Caco-2 (cell line): ENCODE measurements at regions of chr12 and their contacts with region 1.

Region 1: DNA sequence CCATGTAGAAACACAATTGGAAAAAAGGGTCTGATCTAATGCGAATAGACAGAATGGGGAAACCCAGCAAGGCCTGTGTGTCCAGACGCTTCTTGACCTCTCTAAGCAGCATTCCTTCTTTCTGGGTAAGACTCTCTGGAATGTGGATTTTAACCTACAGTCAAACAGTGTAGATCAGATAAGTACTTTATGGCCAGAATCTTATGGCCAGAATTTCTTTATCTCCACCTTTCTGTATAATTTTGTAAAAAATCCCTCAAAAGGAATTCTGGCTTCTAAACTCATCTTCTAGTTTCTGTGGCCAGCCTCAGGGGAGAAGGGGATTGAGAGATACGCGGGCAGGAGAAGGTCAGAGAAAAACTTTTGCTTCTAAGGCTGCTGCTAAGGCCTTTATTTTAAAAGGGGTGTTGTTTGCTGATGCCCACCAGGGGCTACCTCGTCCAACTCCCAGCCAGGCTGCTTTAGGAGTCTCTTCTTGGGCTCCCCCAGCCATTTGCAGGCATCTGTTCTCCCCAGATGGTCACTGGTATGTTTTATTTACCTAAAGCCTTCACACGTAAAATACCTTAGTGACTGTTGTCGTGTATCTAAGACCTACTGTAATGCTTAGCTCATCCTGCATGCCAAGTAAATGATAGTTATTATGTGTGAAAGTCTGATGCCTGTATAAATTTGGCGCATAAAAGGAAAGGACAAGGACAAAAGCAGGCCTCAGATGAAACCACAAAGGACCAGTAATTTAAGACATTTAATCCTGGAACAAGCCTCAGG is 68.4 kb downstream of the ANO6 start:
- DNase-seq: peak; percentile 83
- H3K4me3 ChIP-seq: no peak overlapping the region
- H3K4me3 Mint-ChIP-seq: peak overlapping the region; percentile 67
- H3K27ac Mint-ChIP-seq: peak overlapping the region; percentile 78
- H3K4me1 ChIP-seq: peaks cover 87% of the 10 kb centered on the region
- H3K4me1 Mint-ChIP-seq: peaks cover 88% of the 10 kb centered on the region
- H3K27me3 ChIP-seq: no peaks in the 10 kb centered on the region
- H3K27me3 Mint-ChIP-seq: no peaks in the 10 kb centered on the region
- CTCF ChIP-seq: peak; percentile 24 to 27

Region 2: DNA sequence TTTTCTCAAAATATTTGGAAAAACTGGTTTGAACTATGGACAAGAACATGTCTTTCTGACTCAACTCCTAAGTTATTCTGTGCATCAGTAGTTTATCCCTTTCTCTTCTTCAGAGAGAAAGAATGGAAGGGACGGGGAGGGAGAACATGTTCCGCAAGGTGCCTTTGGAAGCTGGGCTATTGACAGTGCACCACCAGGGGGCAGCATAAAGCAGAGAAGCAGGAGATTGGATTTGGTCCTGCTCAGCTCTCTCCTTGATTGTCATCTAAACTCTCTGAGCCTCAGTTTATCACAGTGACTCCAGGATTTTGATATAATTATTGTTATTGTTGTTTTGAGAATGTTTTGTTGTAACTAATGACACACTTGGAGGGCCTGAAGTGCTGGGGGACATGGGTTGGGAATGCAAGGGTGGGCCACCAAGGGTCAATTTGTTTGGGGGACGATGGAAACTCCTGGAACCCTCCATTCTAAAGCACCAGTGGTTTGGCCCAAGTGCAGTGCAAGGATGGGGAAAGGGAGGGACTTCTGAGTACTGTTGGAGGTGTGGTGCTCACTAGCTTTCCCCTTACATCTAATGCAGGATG is 113.8 kb before region 1 on chr12:
- CTCF ChIA-PET with region 1: no interaction called
- POLR2A ChIA-PET with region 1: no interaction called
- intact Hi-C with region 1: loop called (anchors 5 kb)
- DNase-seq: peak; percentile 84 to 90
- H3K4me3 ChIP-seq: no peak overlapping the region
- H3K4me3 Mint-ChIP-seq: no peak overlapping the region
- H3K27ac Mint-ChIP-seq: no peak overlapping the region
- H3K4me1 ChIP-seq: no peaks in the 10 kb centered on the region
- H3K4me1 Mint-ChIP-seq: peaks cover 12% of the 10 kb centered on the region
- H3K27me3 ChIP-seq: no peaks in the 10 kb centered on the region
- H3K27me3 Mint-ChIP-seq: no peaks in the 10 kb centered on the region
- CTCF ChIP-seq: peak; percentile 94 to 95

Region 3: DNA sequence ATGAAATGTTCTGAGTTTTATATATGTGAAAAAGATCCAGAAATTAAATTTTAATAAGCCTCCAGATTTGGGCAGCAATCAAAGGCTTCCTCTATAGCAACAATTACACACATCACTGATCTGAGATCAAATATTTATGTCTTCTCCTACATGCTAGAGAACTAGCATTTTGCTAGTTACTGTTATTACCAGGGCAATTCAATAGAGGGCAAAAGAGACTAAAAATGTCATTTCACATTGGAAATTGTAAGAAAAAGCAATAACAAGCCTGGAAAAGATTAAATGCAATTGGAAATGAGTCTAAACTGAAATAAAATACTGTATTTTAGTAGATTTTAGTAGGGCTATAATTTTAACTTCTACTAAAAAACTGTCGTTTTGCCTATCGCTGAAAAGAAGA is 101.1 kb before region 1 on chr12:
- CTCF ChIA-PET with region 1: no interaction called
- POLR2A ChIA-PET with region 1: no interaction called
- intact Hi-C with region 1: no loop called
- DNase-seq: no peak
- H3K4me3 ChIP-seq: no peak overlapping the region
- H3K4me3 Mint-ChIP-seq: no peak overlapping the region
- H3K27ac Mint-ChIP-seq: no peak overlapping the region
- H3K4me1 ChIP-seq: peaks cover 21% of the 10 kb centered on the region
- H3K4me1 Mint-ChIP-seq: peaks cover 15% of the 10 kb centered on the region
- H3K27me3 ChIP-seq: no peaks in the 10 kb centered on the region
- H3K27me3 Mint-ChIP-seq: no peaks in the 10 kb centered on the region
- CTCF ChIP-seq: peak; percentile 41 to 53

Region 4: GRCh38 chr12:45215419-45216229 is 68.7 kb before region 1 on chr12 and contains the start of gene ANO6:
- CTCF ChIA-PET with region 1: interaction called, 3 read pairs
- POLR2A ChIA-PET with region 1: no interaction called
- intact Hi-C with region 1: loop called (anchors 1 kb)
- DNase-seq: peak; percentile 93 to 94
- H3K4me3 ChIP-seq: peak within 1 kb of the TSS; percentile 70
- H3K4me3 Mint-ChIP-seq: peak within 1 kb of the TSS; percentile 96
- H3K27ac Mint-ChIP-seq: peak within 1 kb of the TSS; percentile 84
- H3K4me1 ChIP-seq: peaks cover 22% of the 10 kb centered on the region
- H3K4me1 Mint-ChIP-seq: peaks cover 24% of the 10 kb centered on the region
- H3K27me3 ChIP-seq: no peaks in the 10 kb centered on the region
- H3K27me3 Mint-ChIP-seq: no peaks in the 10 kb centered on the region
- CTCF ChIP-seq: peak in 1 of 2 experiments; percentile 70
- total RNA-seq, gene ANO6: 116 and 126 TPM in 2 replicates

Region 5: GRCh38 chr12:45257185-45257930 is 27.0 kb before region 1 on chr12:
- CTCF ChIA-PET with region 1: interaction called, 4 read pairs
- POLR2A ChIA-PET with region 1: interaction called, 4 read pairs
- intact Hi-C with region 1: loop called (anchors 1 kb)
- DNase-seq: no peak
- H3K4me3 ChIP-seq: no peak overlapping the region
- H3K4me3 Mint-ChIP-seq: no peak overlapping the region
- H3K27ac Mint-ChIP-seq: peak overlapping the region; percentile 71
- H3K4me1 ChIP-seq: peaks cover 72% of the 10 kb centered on the region
- H3K4me1 Mint-ChIP-seq: peaks cover 53% of the 10 kb centered on the region
- H3K27me3 ChIP-seq: no peaks in the 10 kb centered on the region
- H3K27me3 Mint-ChIP-seq: no peaks in the 10 kb centered on the region
- CTCF ChIP-seq: no peak

Region 6: GRCh38 chr12:45298716-45299692 is 14.7 kb after region 1 on chr12:
- CTCF ChIA-PET with region 1: interaction called, 3 read pairs
- POLR2A ChIA-PET with region 1: interaction called, 3 read pairs
- intact Hi-C with region 1: loop called (anchors 1 kb)
- DNase-seq: peak in 1 of 2 experiments; percentile 45
- H3K4me3 ChIP-seq: no peak overlapping the region
- H3K4me3 Mint-ChIP-seq: no peak overlapping the region
- H3K27ac Mint-ChIP-seq: peak overlapping the region; percentile 72
- H3K4me1 ChIP-seq: peaks cover 71% of the 10 kb centered on the region
- H3K4me1 Mint-ChIP-seq: peaks cover 30% of the 10 kb centered on the region
- H3K27me3 ChIP-seq: no peaks in the 10 kb centered on the region
- H3K27me3 Mint-ChIP-seq: no peaks in the 10 kb centered on the region
- CTCF ChIP-seq: no peak

Region 7: GRCh38 chr12:45409966-45410365 is 125.7 kb after region 1 on chr12:
- CTCF ChIA-PET with region 1: no interaction called
- POLR2A ChIA-PET with region 1: interaction called, 10 read pairs
- intact Hi-C with region 1: no loop called
- DNase-seq: no peak
- H3K4me3 ChIP-seq: no peak overlapping the region
- H3K4me3 Mint-ChIP-seq: no peak overlapping the region
- H3K27ac Mint-ChIP-seq: no peak overlapping the region
- H3K4me1 ChIP-seq: no peaks in the 10 kb centered on the region
- H3K4me1 Mint-ChIP-seq: no peaks in the 10 kb centered on the region
- H3K27me3 ChIP-seq: no peaks in the 10 kb centered on the region
- H3K27me3 Mint-ChIP-seq: no peaks in the 10 kb centered on the region
- CTCF ChIP-seq: no peak

Region 8: DNA sequence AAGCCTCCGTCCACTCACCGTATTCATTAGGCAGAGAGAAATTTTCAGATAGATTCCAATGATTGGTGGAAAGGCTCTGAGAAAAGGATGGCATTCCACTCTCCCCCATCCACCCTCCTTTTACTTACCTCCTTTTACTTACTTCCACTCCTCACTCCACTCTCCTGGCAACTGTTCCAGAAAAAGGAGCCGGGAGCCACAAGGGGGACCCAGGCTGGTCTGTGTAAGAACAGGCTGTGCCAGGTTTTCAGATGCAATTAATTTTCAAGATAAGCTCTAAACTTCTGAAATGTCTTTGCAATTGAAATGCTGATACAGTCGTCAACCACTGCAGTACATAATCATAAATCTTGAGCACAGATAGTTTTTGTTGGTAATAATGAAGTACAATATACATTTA is 180.4 kb after region 1 on chr12:
- CTCF ChIA-PET with region 1: no interaction called
- POLR2A ChIA-PET with region 1: no interaction called
- intact Hi-C with region 1: no loop called
- DNase-seq: peak in 1 of 2 experiments; percentile 29
- H3K4me3 ChIP-seq: no peak overlapping the region
- H3K4me3 Mint-ChIP-seq: no peak overlapping the region
- H3K27ac Mint-ChIP-seq: no peak overlapping the region
- H3K4me1 ChIP-seq: no peaks in the 10 kb centered on the region
- H3K4me1 Mint-ChIP-seq: no peaks in the 10 kb centered on the region
- H3K27me3 ChIP-seq: no peaks in the 10 kb centered on the region
- H3K27me3 Mint-ChIP-seq: peaks cover 4% of the 10 kb centered on the region
- CTCF ChIP-seq: peak in 1 of 2 experiments; percentile 42